HepG2 (cell line): ENCODE measurements at regions of chr6 and their contacts with region 1.

Region 1: GRCh38 chr6:16761471-16762267 is 409 bp upstream of the ATXN1 start:
- DNase-seq: peak; percentile 92
- ATAC-seq: peak; percentile 80
- H3K4me3 ChIP-seq: peak overlapping the region; percentile 92 to 98 (median 93)
- H3K27ac ChIP-seq: peak overlapping the region; percentile 87
- H3K4me1 ChIP-seq: peaks cover 45% of the 10 kb centered on the region
- H3K27me3 ChIP-seq: no peaks in the 10 kb centered on the region; a peak in 1 of 5 replicates
- CTCF ChIP-seq: peak; percentile 74
- EP300 ChIP-seq: peak; percentile 17 to 64; a peak in 3 of 4 replicates
- POLR2A ChIP-seq: peak in 1 of 2 experiments; percentile 60
- RAD21 ChIP-seq: peak; percentile 93

Region 2: GRCh38 chr6:16332175-16332542 is 429.5 kb before region 1 on chr6:
- CTCF ChIA-PET with region 1: interaction called, 3 read pairs
- POLR2A ChIA-PET with region 1: interaction called, 4 read pairs
- in situ Hi-C with region 1: loop called (anchors 5 kb)
- intact Hi-C with region 1: loop called (anchors 1 kb)
- DNase-seq: peak; percentile 78
- ATAC-seq: peak; percentile 94
- H3K4me3 ChIP-seq: no peak overlapping the region
- H3K27ac ChIP-seq: no peak overlapping the region
- H3K4me1 ChIP-seq: peaks cover 7% of the 10 kb centered on the region
- H3K27me3 ChIP-seq: no peaks in the 10 kb centered on the region
- CTCF ChIP-seq: peak; percentile 91
- EP300 ChIP-seq: no peak
- POLR2A ChIP-seq: no peak
- RAD21 ChIP-seq: peak; percentile 79; the same call in 1 of the 2 replicates

Region 3: GRCh38 chr6:16539086-16539931 is 222.4 kb before region 1 on chr6:
- CTCF ChIA-PET with region 1: no interaction called
- POLR2A ChIA-PET with region 1: interaction called, 3 read pairs
- in situ Hi-C with region 1: no loop called
- intact Hi-C with region 1: loop called (anchors 1 kb)
- DNase-seq: peak; percentile 96
- ATAC-seq: peak; percentile 94
- H3K4me3 ChIP-seq: no peak overlapping the region
- H3K27ac ChIP-seq: peak overlapping the region; percentile 70
- H3K4me1 ChIP-seq: peaks cover 26% of the 10 kb centered on the region
- H3K27me3 ChIP-seq: no peaks in the 10 kb centered on the region
- CTCF ChIP-seq: peak; percentile 68
- EP300 ChIP-seq: peak; percentile 69 to 87; a peak in 3 of 4 replicates
- POLR2A ChIP-seq: no peak
- RAD21 ChIP-seq: no peak

Region 4: GRCh38 chr6:16700202-16700915 is 61.3 kb before region 1 on chr6:
- CTCF ChIA-PET with region 1: no interaction called
- POLR2A ChIA-PET with region 1: interaction called, 23 read pairs
- in situ Hi-C with region 1: no loop called
- intact Hi-C with region 1: no loop called
- DNase-seq: no peak
- ATAC-seq: no peak; the same call in 2 of the 3 replicates
- H3K4me3 ChIP-seq: no peak overlapping the region; a peak in 1 of 6 replicates
- H3K27ac ChIP-seq: peak overlapping the region; percentile 71
- H3K4me1 ChIP-seq: peaks cover 61% of the 10 kb centered on the region
- H3K27me3 ChIP-seq: no peaks in the 10 kb centered on the region
- CTCF ChIP-seq: no peak
- EP300 ChIP-seq: no peak
- POLR2A ChIP-seq: no peak
- RAD21 ChIP-seq: no peak

Region 5: GRCh38 chr6:16741112-16742016 is 20.3 kb before region 1 on chr6:
- CTCF ChIA-PET with region 1: no interaction called
- POLR2A ChIA-PET with region 1: interaction called, 11 read pairs
- in situ Hi-C with region 1: no loop called
- intact Hi-C with region 1: no loop called
- DNase-seq: no peak
- ATAC-seq: no peak
- H3K4me3 ChIP-seq: no peak overlapping the region
- H3K27ac ChIP-seq: no peak overlapping the region
- H3K4me1 ChIP-seq: peaks cover 62% of the 10 kb centered on the region
- H3K27me3 ChIP-seq: no peaks in the 10 kb centered on the region
- CTCF ChIP-seq: no peak
- EP300 ChIP-seq: no peak
- POLR2A ChIP-seq: no peak
- RAD21 ChIP-seq: no peak

Region 6: DNA sequence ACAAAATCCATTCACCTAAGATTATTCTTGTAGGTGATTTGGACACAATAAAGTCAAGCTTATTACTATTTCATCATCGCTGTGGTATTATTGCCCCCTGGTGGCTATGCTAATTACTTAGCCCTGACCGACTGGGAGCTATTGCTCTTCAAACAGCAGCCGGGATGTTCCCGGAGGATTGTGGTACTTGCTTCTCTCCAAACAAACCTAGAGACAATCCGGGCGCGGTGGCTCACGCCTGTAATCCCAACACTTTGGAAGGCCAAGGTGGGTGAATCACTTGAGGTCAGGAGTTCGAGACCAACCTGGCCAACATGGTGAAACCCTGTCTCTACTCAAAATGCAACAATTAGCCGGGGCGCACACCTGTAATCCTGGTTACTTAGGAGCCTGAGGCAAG is 324.8 kb after region 1 on chr6:
- CTCF ChIA-PET with region 1: no interaction called
- POLR2A ChIA-PET with region 1: no interaction called
- in situ Hi-C with region 1: no loop called
- intact Hi-C with region 1: loop called (anchors 2 kb)
- DNase-seq: peak; percentile 63
- ATAC-seq: peak; percentile 95
- H3K4me3 ChIP-seq: no peak overlapping the region
- H3K27ac ChIP-seq: no peak overlapping the region
- H3K4me1 ChIP-seq: no peaks in the 10 kb centered on the region
- H3K27me3 ChIP-seq: peaks cover 0 to 10% of the 10 kb centered on the region in 2 experiments; a peak in 1 of 5 replicates
- CTCF ChIP-seq: peak; percentile 74
- EP300 ChIP-seq: no peak
- POLR2A ChIP-seq: no peak
- RAD21 ChIP-seq: 0 out of 2 replicates have a peak, but pooled peaks have one; percentile 39